ENCODE measurements at regions of chr7 and their contacts with region 1.

Region 1: DNA sequence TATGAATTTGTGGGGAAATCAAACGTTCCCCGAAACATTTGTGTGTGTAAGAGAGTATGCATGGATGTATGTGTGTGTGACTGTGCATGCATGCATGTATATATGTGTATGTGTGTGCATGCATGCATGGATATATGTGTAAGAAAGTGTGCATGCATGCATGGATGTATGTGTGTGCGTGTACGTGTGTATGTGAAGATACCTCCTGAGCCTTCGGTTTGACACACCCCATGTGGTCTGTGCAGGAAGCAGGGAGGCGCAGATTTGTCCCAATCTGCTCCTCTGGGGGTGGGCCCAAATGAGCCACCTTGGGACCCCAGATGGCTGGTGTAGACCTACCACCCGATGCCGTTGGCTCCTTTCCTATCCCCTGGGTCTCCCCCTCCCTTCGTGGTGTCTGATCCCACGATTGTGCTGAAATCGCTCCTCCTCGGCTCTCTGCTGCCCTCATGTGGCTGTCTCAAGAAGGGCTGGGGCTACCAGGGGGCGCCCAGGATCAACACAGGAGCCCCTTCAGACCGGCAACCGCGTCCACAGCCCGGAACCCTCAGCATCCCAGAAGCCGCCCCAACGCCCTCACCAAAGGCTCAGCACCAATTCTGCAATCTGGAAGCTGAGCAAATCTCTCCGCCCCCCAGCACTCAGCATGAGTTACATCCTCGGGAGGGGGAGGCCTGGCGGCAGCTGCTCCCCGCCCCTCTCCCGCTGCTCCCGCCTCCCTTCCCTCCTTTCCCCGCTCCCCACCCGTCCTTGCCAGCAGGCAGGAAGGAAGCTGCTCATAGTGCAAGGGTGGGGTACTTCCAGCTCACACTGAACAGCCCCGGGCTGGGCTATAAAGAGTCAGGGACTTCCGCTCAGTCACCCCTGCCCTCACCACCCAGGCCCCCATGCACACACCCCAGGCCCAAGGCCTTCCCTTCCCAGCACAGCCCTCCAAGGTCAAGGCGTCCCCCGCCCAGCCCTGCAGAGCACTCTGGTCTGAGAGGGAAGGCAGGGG is 2.3 kb upstream of the NOS3 start:
- DNase-seq: peak; percentile 95
- H3K4me3 ChIP-seq: peak overlapping the region; percentile 13 to 46; a peak in 2 of 4 replicates
- H3K27ac ChIP-seq: peak overlapping the region in 1 of 2 experiments; percentile 86; a peak in 2 of 4 replicates
- H3K4me1 ChIP-seq: peaks cover 0 to 32% of the 10 kb centered on the region in 2 experiments; a peak in 2 of 4 replicates
- H3K27me3 ChIP-seq: peaks cover 13% of the 10 kb centered on the region; the same call in 1 of the 2 replicates
- CTCF ChIP-seq: peak; percentile 97
- EP300 ChIP-seq: no peak
- RAD21 ChIP-seq: peak; percentile 92

Region 2: GRCh38 chr7:150340024-150340749 is 648.3 kb before region 1 on chr7:
- CTCF ChIA-PET with region 1: no interaction called
- POLR2A ChIA-PET with region 1: no interaction called
- DNase-seq: no peak
- H3K4me3 ChIP-seq: no peak overlapping the region
- H3K27ac ChIP-seq: no peak overlapping the region
- H3K4me1 ChIP-seq: no peaks in the 10 kb centered on the region; a peak in 1 of 4 replicates
- H3K27me3 ChIP-seq: peaks cover 8% of the 10 kb centered on the region; the same call in 1 of the 2 replicates
- CTCF ChIP-seq: no peak
- EP300 ChIP-seq: no peak
- RAD21 ChIP-seq: no peak

Region 3: GRCh38 chr7:150787321-150788281 is 200.9 kb before region 1 on chr7:
- CTCF ChIA-PET with region 1: interaction called, 45 read pairs
- POLR2A ChIA-PET with region 1: interaction called, 4 read pairs
- DNase-seq: peak; percentile 75
- H3K4me3 ChIP-seq: no peak overlapping the region
- H3K27ac ChIP-seq: peak overlapping the region; percentile 47 to 100; a peak in 3 of 4 replicates
- H3K4me1 ChIP-seq: peaks cover 19 to 61% of the 10 kb centered on the region in 2 experiments; a peak in 3 of 4 replicates
- H3K27me3 ChIP-seq: no peaks in the 10 kb centered on the region
- CTCF ChIP-seq: no peak
- EP300 ChIP-seq: peak; percentile 31 to 96; a peak in 3 of 4 replicates
- RAD21 ChIP-seq: peak; percentile 59

Region 4: GRCh38 chr7:150927956-150928344 is 60.6 kb before region 1 on chr7:
- CTCF ChIA-PET with region 1: interaction called, 20 read pairs
- POLR2A ChIA-PET with region 1: no interaction called
- DNase-seq: no peak
- H3K4me3 ChIP-seq: no peak overlapping the region
- H3K27ac ChIP-seq: no peak overlapping the region
- H3K4me1 ChIP-seq: peaks cover 0 to 16% of the 10 kb centered on the region in 2 experiments; a peak in 2 of 4 replicates
- H3K27me3 ChIP-seq: 0 out of 2 replicates have a peak, but pooled peaks cover 14% of the 10 kb centered on the region
- CTCF ChIP-seq: no peak
- EP300 ChIP-seq: no peak
- RAD21 ChIP-seq: no peak

Region 5: GRCh38 chr7:150941981-150942590 is 46.4 kb before region 1 on chr7:
- CTCF ChIA-PET with region 1: interaction called, 13 read pairs
- POLR2A ChIA-PET with region 1: no interaction called
- DNase-seq: peak; percentile 71
- H3K4me3 ChIP-seq: no peak overlapping the region
- H3K27ac ChIP-seq: peak overlapping the region in 1 of 2 experiments; percentile 82; a peak in 2 of 4 replicates
- H3K4me1 ChIP-seq: peaks cover 0 to 84% of the 10 kb centered on the region in 2 experiments; a peak in 2 of 4 replicates
- H3K27me3 ChIP-seq: 0 out of 2 replicates have a peak, but pooled peaks cover 11% of the 10 kb centered on the region
- CTCF ChIP-seq: no peak
- EP300 ChIP-seq: 0 out of 4 replicates have a peak, but pooled peaks of 1 of the 2 experiments have one; percentile 17
- RAD21 ChIP-seq: no peak

Region 6: DNA sequence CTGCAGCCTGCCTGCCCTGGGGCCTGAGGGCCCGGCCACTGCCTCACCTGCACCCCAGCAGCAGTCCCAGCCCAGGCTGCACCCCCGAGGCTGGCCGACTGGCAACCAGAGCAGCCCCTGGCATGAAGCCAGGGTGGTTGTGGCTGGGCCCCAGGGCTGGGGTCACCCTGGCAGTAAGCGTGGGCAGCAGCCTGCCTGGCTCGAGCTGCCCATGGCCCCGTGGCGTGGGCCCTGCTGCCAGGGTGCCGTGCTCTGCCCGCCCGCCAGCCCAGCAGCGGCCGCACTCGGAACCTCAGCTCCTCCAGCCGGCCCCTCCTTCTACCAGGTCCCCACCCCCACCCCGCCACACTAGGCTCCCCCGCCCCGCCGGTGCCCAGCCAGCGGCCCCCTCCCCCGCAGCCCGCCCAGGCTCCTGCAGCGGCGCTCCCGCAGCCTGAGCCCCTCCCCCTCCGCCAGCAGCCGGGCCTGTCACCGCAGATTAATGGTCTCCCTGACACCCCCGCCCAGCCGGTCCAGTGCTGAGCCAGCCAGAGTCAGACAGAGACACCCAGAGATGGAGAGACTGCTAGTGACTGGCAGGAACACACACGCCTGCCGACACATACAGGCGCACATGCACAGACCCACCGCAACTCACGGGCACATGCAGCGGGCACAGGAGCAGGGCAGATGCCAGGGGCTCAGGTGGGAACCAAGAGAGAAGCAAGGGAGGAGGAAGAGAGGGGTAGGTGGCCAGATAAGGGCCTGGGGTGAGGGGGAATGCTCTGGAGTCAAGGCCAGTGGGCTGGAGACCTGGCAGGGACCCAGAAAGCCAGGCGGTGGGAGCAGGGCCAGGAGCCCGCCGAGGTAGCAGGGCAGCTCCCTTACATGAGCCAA is 32.8 kb before region 1 on chr7:
- CTCF ChIA-PET with region 1: interaction called, 761 read pairs
- POLR2A ChIA-PET with region 1: interaction called, 11 read pairs
- DNase-seq: peak; percentile 97
- H3K4me3 ChIP-seq: peak overlapping the region in 1 of 2 experiments; percentile 45; a peak in 2 of 4 replicates
- H3K27ac ChIP-seq: peak overlapping the region in 1 of 2 experiments; percentile 94; a peak in 3 of 4 replicates
- H3K4me1 ChIP-seq: peaks cover 0 to 85% of the 10 kb centered on the region in 2 experiments; a peak in 2 of 4 replicates
- H3K27me3 ChIP-seq: peaks cover 15% of the 10 kb centered on the region; the same call in 1 of the 2 replicates
- CTCF ChIP-seq: no peak
- EP300 ChIP-seq: peak in 1 of 2 experiments; percentile 12; a peak in 1 of 4 replicates
- RAD21 ChIP-seq: peak; percentile 3; the same call in 1 of the 2 replicates

Region 7: GRCh38 chr7:150974468-150975391 is 13.8 kb before region 1 on chr7:
- CTCF ChIA-PET with region 1: interaction called, 761 read pairs
- POLR2A ChIA-PET with region 1: interaction called, 11 read pairs
- DNase-seq: peak; percentile 82
- H3K4me3 ChIP-seq: peak overlapping the region in 1 of 2 experiments; percentile 37; a peak in 2 of 4 replicates
- H3K27ac ChIP-seq: peak overlapping the region in 1 of 2 experiments; percentile 100; a peak in 3 of 4 replicates
- H3K4me1 ChIP-seq: peaks cover 0 to 90% of the 10 kb centered on the region in 2 experiments; a peak in 2 of 4 replicates
- H3K27me3 ChIP-seq: peaks cover 71% of the 10 kb centered on the region
- CTCF ChIP-seq: peak; percentile 36
- EP300 ChIP-seq: no peak
- RAD21 ChIP-seq: peak; percentile 38; the same call in 1 of the 2 replicates

Region 8: GRCh38 chr7:151008511-151009323 is 20.2 kb after region 1 on chr7:
- CTCF ChIA-PET with region 1: interaction called, 151 read pairs
- POLR2A ChIA-PET with region 1: no interaction called
- DNase-seq: peak; percentile 80
- H3K4me3 ChIP-seq: peak overlapping the region in 1 of 2 experiments; percentile 31; a peak in 1 of 4 replicates
- H3K27ac ChIP-seq: no peak overlapping the region
- H3K4me1 ChIP-seq: peaks cover 0 to 24% of the 10 kb centered on the region in 2 experiments; a peak in 1 of 4 replicates
- H3K27me3 ChIP-seq: 0 out of 2 replicates have a peak, but pooled peaks cover 5% of the 10 kb centered on the region
- CTCF ChIP-seq: peak; percentile 59
- EP300 ChIP-seq: no peak
- RAD21 ChIP-seq: no peak